GM12878 (cell line): ENCODE measurements at regions of chr2 and their contacts with region 1.

Region 1: GRCh38 chr2:99154643-99155536 is at the starts of genes LIPT1 and TSGA10:
- DNase-seq: peak; percentile 69
- ATAC-seq: peak; percentile 94
- H3K4me3 ChIP-seq: peak within 1 kb of the TSS; percentile 78
- H3K27ac ChIP-seq: peak within 1 kb of the TSS; percentile 76
- H3K4me1 ChIP-seq: no peaks in the 10 kb centered on the region
- H3K27me3 ChIP-seq: no peaks in the 10 kb centered on the region
- CTCF ChIP-seq: no peak
- EP300 ChIP-seq: peak; percentile 32 to 55; a peak in 2 of 4 replicates
- POLR2A ChIP-seq: peak; percentile 97
- RAD21 ChIP-seq: no peak
- polyA plus RNA-seq, gene LIPT1: 14.4 to 15.3 TPM
- polyA plus RNA-seq, gene TSGA10: 10.2 to 11.6 TPM

Region 2: DNA sequence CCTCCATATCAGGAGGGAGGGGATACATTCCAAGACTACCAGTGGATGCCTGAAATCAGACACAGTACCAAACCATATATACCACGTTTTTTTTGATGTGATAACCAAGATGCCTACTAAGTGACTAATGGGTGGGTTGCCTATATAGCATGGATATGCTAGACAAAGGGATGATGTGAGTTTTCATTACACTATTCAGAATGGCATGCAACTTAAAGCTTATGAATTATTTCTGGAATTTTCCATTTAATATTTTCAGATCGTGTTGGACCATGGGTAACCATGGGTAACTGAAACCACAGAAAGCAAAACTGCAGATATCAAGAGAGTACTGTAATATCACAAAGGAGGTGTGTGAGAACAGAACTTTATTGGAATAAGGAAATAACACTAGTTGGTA is 179.3 kb before region 1 on chr2:
- CTCF ChIA-PET with region 1: no interaction called
- POLR2A ChIA-PET with region 1: no interaction called
- RAD21 ChIA-PET with region 1: no interaction called
- SMC1A ChIA-PET with region 1: no interaction called
- in situ Hi-C with region 1: no loop called
- intact Hi-C with region 1: no loop called
- DNase-seq: no peak
- ATAC-seq: no peak
- H3K4me3 ChIP-seq: no peak overlapping the region
- H3K27ac ChIP-seq: no peak overlapping the region
- H3K4me1 ChIP-seq: no peaks in the 10 kb centered on the region
- H3K27me3 ChIP-seq: no peaks in the 10 kb centered on the region
- CTCF ChIP-seq: no peak
- EP300 ChIP-seq: no peak
- POLR2A ChIP-seq: no peak
- RAD21 ChIP-seq: no peak

Region 3: GRCh38 chr2:99141110-99142108 is 13.5 kb before region 1 on chr2 and contains the start of gene C2orf15:
- CTCF ChIA-PET with region 1: interaction called, 9 read pairs
- POLR2A ChIA-PET with region 1: interaction called, 26 read pairs
- RAD21 ChIA-PET with region 1: interaction called, 8 read pairs
- SMC1A ChIA-PET with region 1: interaction called, 11 read pairs
- in situ Hi-C with region 1: no loop called
- intact Hi-C with region 1: no loop called
- DNase-seq: peak; percentile 80
- ATAC-seq: peak; percentile 94
- H3K4me3 ChIP-seq: peak within 1 kb of the TSS; percentile 77
- H3K27ac ChIP-seq: peak within 1 kb of the TSS; percentile 55
- H3K4me1 ChIP-seq: peaks cover 10% of the 10 kb centered on the region
- H3K27me3 ChIP-seq: no peaks in the 10 kb centered on the region
- CTCF ChIP-seq: no peak
- EP300 ChIP-seq: no peak
- POLR2A ChIP-seq: peak; percentile 89
- RAD21 ChIP-seq: no peak
- polyA plus RNA-seq, gene C2orf15: 1.7 to 2.3 TPM

Region 4: DNA sequence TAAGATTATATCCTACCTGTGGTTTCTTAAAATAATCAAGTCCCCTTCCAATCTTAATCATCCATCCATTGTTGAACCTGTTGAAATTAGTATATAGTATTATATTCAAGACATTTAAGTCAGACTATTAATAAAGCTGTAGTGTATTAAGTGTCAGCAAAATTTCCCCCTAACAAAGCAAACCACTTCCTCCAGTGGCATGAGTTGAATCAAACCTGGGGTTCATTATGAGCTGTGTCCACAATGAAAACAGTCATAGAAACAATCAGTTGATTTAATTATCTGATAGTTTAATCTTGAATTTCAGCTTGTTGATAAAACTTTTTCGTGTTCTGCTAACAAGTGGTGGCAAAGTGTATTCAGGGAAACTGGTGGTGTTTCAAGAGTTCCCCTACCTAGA is 14.6 kb after region 1 on chr2:
- CTCF ChIA-PET with region 1: interaction called, 24 read pairs
- POLR2A ChIA-PET with region 1: no interaction called
- RAD21 ChIA-PET with region 1: no interaction called
- SMC1A ChIA-PET with region 1: interaction called, 16 read pairs
- in situ Hi-C with region 1: no loop called
- intact Hi-C with region 1: no loop called
- DNase-seq: no peak
- ATAC-seq: peak; percentile 88
- H3K4me3 ChIP-seq: no peak overlapping the region
- H3K27ac ChIP-seq: 0 out of 2 replicates have a peak overlapping the region, but pooled peaks have one; percentile 18
- H3K4me1 ChIP-seq: no peaks in the 10 kb centered on the region
- H3K27me3 ChIP-seq: no peaks in the 10 kb centered on the region
- CTCF ChIP-seq: no peak
- EP300 ChIP-seq: no peak
- POLR2A ChIP-seq: no peak
- RAD21 ChIP-seq: no peak

Region 5: DNA sequence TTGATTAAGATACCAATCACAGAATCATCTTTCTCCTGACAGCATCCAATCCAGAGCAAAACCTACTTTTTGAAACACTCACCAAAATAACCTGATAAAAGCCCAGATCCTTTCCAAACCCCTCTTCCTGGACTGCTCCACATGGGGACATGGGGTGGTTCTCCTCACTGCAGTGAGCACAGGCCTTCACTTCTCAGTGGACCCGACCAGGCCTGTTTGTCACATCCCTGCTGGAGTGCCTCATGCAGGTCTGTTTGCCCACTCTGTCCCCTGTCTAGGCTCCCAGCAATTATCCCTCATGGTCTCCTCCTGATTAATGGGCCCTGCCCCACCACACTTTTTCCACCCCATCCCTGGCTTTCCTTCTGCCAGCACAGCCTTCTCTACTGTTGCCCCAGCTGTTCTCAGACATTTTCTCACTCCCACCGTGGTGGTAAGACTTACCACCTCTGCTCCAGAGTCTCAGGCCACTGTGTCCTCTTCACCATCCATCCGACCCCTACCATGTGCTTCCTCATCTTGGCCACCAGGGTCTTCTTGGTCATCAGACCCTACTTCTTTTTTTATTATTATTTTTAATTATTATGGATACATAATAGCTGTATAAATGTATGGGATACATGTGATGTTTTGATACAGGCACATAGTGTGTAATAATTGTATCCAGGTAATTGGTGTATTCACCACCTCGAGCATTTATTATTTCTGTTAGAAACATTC is 47.2 kb after region 1 on chr2:
- CTCF ChIA-PET with region 1: no interaction called
- POLR2A ChIA-PET with region 1: no interaction called
- RAD21 ChIA-PET with region 1: no interaction called
- SMC1A ChIA-PET with region 1: no interaction called
- in situ Hi-C with region 1: no loop called
- intact Hi-C with region 1: no loop called
- DNase-seq: no peak
- ATAC-seq: no peak
- H3K4me3 ChIP-seq: no peak overlapping the region
- H3K27ac ChIP-seq: no peak overlapping the region
- H3K4me1 ChIP-seq: no peaks in the 10 kb centered on the region
- H3K27me3 ChIP-seq: no peaks in the 10 kb centered on the region
- CTCF ChIP-seq: no peak
- EP300 ChIP-seq: no peak
- POLR2A ChIP-seq: no peak
- RAD21 ChIP-seq: no peak